Activated T-helper 2 cell treated with anti-CD3 and anti-CD28 coated beads, Interferon-gamma antibody, Interleukin-2, Interleukin-4, amounts not matched to agents 10 μg/mL and 5 μg/mL and 100 μg/mL, durations not matched to agents 14 hours and 24 hours and 36 hours (primary cell): ENCODE measurements at regions of chr12 and their contacts with region 1.

Region 1: DNA sequence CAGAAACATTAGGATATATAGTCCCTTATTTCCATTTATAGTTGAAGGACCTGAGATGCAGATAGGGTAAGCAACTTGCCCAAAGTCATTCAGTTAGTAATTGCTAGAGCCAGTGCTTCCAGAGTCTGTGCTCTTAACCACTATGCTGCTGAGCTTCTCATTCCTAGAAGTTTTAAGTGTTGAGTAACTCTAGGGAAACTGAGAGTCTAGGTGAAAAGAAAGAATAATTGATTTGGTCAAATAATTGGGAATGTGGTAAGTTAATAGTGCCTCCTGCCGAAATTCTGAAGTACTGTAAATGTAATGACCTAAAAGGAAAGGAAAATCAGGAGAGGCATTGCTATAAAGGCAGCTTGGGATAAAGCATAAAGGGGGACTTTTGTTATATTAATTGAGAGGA is 14.1 kb downstream of the PYROXD1 start:
- DNase-seq: no peak
- H3K4me3 Mint-ChIP-seq: no peak overlapping the region
- H3K27ac Mint-ChIP-seq: no peak overlapping the region
- H3K4me1 Mint-ChIP-seq: peaks cover 44% of the 10 kb centered on the region
- H3K27me3 Mint-ChIP-seq: no peaks in the 10 kb centered on the region

Region 2: GRCh38 chr12:21438643-21439042 is 12.9 kb before region 1 on chr12:
- intact Hi-C with region 1: loop called (anchors 1 kb)
- DNase-seq: no peak
- H3K4me3 Mint-ChIP-seq: peak overlapping the region; percentile 92
- H3K27ac Mint-ChIP-seq: peak overlapping the region; percentile 93
- H3K4me1 Mint-ChIP-seq: peaks cover 39% of the 10 kb centered on the region
- H3K27me3 Mint-ChIP-seq: no peaks in the 10 kb centered on the region

Region 3: DNA sequence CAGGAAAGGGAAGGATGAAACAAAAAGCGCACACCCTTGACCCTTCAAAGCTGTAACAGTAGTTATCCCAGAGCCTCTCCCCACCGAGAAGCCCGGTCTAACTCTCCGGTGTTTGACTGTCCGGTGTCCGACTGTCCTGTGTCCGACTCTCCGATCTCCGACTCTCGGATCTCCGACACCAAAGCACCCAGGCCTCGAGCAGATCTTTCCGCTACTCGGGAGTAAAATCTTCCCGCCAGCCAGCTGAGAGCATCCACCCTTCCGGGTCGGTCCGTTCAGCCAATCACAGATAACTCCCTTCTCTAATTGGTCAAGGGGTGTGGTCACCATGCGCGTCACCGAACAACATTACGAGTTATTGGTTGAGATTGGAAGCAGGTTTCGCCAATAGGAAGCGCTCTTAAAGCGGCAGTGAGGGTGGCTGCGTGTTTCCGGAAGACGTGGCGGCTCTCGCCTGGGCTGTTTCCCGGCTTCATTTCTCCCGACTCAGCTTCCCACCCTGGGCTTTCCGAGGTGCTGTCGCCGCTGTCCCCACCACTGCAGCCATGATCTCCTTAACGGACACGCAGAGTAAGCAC is 49.9 kb after region 1 on chr12 and contains the starts of genes GOLT1B and RECQL:
- intact Hi-C with region 1: loop called (anchors 1 kb)
- DNase-seq: peak; percentile 91
- H3K4me3 Mint-ChIP-seq: no peak within 1 kb of the TSS
- H3K27ac Mint-ChIP-seq: no peak within 1 kb of the TSS
- H3K4me1 Mint-ChIP-seq: peaks cover 45% of the 10 kb centered on the region
- H3K27me3 Mint-ChIP-seq: no peaks in the 10 kb centered on the region
- total RNA-seq, gene GOLT1B: 42.2 and 46.1 TPM in 2 replicates
- total RNA-seq, gene RECQL: 68.4 and 69.0 TPM in 2 replicates

Region 4: DNA sequence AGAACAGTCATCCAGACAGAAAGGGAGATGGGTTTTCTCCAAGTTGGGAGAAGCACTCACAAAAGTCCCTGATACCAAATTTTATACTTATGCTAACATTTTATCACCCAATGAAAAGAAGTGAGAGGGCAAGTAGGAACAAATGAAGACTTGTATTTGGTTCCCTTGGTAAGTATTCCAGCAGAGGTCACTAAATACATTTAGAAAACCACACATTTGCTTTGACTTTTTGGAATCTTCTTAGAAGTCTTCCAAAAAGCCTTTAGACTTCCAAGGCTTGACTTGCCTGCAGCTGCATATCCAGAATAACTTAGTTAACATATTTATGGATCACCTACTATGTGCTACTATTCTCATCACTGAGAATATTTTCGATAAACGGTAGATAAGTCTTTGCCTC is 156.2 kb after region 1 on chr12:
- intact Hi-C with region 1: no loop called
- DNase-seq: no peak
- H3K4me3 Mint-ChIP-seq: no peak overlapping the region
- H3K27ac Mint-ChIP-seq: no peak overlapping the region
- H3K4me1 Mint-ChIP-seq: no peaks in the 10 kb centered on the region
- H3K27me3 Mint-ChIP-seq: peaks cover 6% of the 10 kb centered on the region

Region 5: DNA sequence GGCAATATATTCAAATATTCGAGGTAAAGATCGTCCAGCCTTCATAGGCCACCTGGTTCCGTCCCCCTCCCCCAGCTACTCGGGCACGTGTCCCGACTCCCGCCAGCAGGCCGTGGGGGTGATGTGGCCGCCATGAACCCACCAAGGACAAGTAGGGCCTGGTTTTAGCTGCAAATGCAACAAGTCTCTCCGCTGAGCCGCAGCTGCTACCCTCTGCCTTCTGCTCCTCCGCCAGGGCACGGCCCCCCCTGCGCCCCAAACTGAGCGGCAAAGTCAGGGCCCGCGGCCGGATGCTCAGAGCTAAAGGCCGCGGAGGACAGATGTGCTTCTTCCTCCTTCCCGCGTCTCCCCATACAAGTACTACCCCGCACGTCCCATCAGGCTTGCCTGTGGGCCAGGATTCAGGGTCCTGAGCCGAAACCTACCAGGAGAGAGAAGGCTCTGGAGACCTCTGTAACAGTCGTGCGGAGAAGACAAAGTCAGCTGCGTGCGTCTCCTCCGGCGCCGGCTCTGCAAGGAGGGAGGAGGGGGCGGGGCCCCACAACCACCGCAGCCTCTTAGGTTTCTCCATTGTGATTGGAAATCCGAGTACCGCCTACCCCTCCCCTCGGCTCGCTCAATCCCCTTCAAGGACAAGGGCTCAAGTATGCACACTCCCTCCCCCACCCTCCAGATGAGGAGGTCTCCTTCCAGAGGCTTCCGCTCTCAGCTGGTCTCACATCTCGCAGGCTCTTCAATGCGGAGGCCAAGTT is 206.0 kb after region 1 on chr12 and contains the start of gene LDHB:
- intact Hi-C with region 1: loop called (anchors 2 kb)
- DNase-seq: peak; percentile 93
- H3K4me3 Mint-ChIP-seq: peak within 1 kb of the TSS; percentile 99
- H3K27ac Mint-ChIP-seq: peak within 1 kb of the TSS; percentile 99
- H3K4me1 Mint-ChIP-seq: peaks cover 37% of the 10 kb centered on the region
- H3K27me3 Mint-ChIP-seq: no peaks in the 10 kb centered on the region
- total RNA-seq, gene LDHB: 1,305 and 1,321 TPM in 2 replicates